Activated naive CD4-positive, alpha-beta T cell treated with anti-CD3 and anti-CD28 coated beads for 36 hours (primary cell): ENCODE measurements at regions of chr2 and their contacts with region 1.

Region 1: GRCh38 chr2:190180313-190181122 is 118.0 kb upstream of the MSTN start:
- DNase-seq: peak; percentile 29
- H3K4me3 Mint-ChIP-seq: peak overlapping the region; percentile 42
- H3K27ac Mint-ChIP-seq: no peak overlapping the region
- H3K4me1 Mint-ChIP-seq: peaks cover 7% of the 10 kb centered on the region
- H3K27me3 Mint-ChIP-seq: peaks cover 24% of the 10 kb centered on the region

Region 2: DNA sequence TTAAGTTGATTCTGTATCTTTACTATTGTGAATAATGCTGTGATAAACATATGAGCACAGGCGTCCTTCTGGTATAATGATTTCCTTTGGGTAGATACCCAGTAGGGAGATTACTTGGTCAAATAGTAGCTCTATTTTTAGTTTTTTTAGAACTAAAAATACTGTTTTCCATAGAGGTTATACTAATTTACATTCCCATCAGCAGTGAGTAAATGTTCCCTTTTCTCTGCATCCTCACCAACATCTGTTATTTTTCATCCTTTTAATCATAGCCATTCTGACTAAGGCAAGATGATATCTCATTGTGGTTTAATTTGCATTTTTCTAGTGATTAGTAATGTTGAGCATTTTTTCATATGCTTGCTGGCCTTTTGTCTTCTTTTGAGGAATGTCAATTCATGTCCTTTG is 361.2 kb before region 1 on chr2:
- CTCF ChIA-PET with region 1: no interaction called
- intact Hi-C with region 1: loop called (anchors 10 kb)
- DNase-seq: no peak
- H3K4me3 Mint-ChIP-seq: no peak overlapping the region
- H3K27ac Mint-ChIP-seq: peak overlapping the region; percentile 68
- H3K4me1 Mint-ChIP-seq: peaks cover 22% of the 10 kb centered on the region
- H3K27me3 Mint-ChIP-seq: no peaks in the 10 kb centered on the region

Region 3: DNA sequence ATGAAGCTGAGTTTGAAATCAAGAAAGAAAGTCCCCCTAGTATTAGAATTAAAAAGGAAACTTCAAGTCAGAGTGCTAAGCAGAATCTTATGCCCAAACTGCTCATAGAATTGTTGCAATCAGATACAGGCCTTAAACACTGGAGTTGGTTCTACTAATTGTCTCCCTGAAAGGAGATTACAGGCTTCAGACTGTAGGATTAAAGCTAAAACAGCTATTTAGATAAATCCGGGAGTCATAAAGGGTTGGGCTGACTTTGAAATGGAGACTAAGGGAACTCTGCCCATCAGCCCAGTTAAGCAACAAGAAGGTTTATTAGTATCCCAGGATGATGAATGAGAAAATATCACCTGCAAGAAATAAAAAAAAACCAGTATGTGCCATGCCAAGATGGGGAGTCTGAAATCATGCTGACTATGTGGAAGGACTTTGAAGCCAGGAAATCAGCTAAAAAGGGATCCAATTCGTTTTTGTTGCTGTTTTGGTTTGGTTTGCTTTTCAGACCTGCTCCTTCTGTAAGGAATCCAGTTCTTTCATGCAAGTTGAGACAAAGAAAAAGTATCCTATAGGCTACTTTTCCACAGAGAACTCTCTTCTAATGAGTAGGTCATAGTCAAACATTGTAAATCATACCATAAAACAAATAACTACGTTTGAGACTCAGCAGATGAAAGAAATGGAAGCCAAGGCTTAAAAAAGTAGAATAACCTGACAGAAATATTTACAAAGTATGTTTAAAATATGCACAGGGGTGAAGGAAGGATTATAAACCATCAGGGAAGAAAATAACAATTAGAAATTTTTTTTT is 80.4 kb before region 1 on chr2:
- CTCF ChIA-PET with region 1: no interaction called
- intact Hi-C with region 1: no loop called
- DNase-seq: no peak
- H3K4me3 Mint-ChIP-seq: no peak overlapping the region
- H3K27ac Mint-ChIP-seq: no peak overlapping the region
- H3K4me1 Mint-ChIP-seq: no peaks in the 10 kb centered on the region
- H3K27me3 Mint-ChIP-seq: peaks cover 6% of the 10 kb centered on the region

Region 4: DNA sequence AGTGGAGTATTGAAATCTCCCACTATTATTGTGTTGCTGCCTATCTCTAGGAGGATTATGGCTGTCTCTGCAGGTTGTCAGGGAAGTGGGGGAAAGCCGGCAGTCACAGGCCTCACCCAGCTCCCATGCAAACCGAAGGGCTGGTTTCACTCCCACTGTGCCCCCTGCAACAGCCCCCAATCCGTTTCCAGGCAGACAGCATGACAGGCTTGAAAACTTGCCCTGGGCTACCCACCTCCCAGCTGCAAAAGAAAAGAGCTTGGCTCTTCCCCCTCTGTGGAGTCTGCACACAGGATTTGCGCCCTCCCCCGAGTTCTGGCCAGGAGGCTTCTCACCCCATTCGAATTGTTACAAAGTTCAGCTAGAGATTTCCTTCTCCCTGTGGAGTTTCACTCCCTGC is 30.6 kb before region 1 on chr2:
- CTCF ChIA-PET with region 1: no interaction called
- intact Hi-C with region 1: no loop called
- DNase-seq: no peak
- H3K4me3 Mint-ChIP-seq: no peak overlapping the region
- H3K27ac Mint-ChIP-seq: no peak overlapping the region
- H3K4me1 Mint-ChIP-seq: no peaks in the 10 kb centered on the region
- H3K27me3 Mint-ChIP-seq: no peaks in the 10 kb centered on the region

Region 5: GRCh38 chr2:190277234-190278112 is 97.0 kb after region 1 on chr2:
- CTCF ChIA-PET with region 1: no interaction called
- intact Hi-C with region 1: loop called (anchors 1 kb)
- DNase-seq: peak; percentile 51
- H3K4me3 Mint-ChIP-seq: no peak overlapping the region
- H3K27ac Mint-ChIP-seq: no peak overlapping the region
- H3K4me1 Mint-ChIP-seq: peaks cover 2% of the 10 kb centered on the region
- H3K27me3 Mint-ChIP-seq: no peaks in the 10 kb centered on the region